ENCODE measurements at regions of chr7 and their contacts with region 1.

Region 1: GRCh38 chr7:100586266-100587025 is at the start of gene FBXO24:
- DNase-seq: peak; percentile 98
- ATAC-seq: peak; percentile 83
- H3K4me3 Mint-ChIP-seq: peak within 1 kb of the TSS; percentile 94
- H3K27ac Mint-ChIP-seq: peak within 1 kb of the TSS; percentile 96
- H3K4me1 Mint-ChIP-seq: peaks cover 27% of the 10 kb centered on the region
- H3K27me3 Mint-ChIP-seq: peaks cover 11% of the 10 kb centered on the region
- total RNA-seq, gene FBXO24: 1.1 to 1.2 TPM

Region 2: GRCh38 chr7:100509231-100509630 is 77.2 kb before region 1 on chr7:
- POLR2A ChIA-PET with region 1: no interaction called
- DNase-seq: no peak
- ATAC-seq: no peak
- H3K4me3 Mint-ChIP-seq: no peak overlapping the region
- H3K27ac Mint-ChIP-seq: no peak overlapping the region
- H3K4me1 Mint-ChIP-seq: no peaks in the 10 kb centered on the region
- H3K27me3 Mint-ChIP-seq: peaks cover 16% of the 10 kb centered on the region

Region 3: DNA sequence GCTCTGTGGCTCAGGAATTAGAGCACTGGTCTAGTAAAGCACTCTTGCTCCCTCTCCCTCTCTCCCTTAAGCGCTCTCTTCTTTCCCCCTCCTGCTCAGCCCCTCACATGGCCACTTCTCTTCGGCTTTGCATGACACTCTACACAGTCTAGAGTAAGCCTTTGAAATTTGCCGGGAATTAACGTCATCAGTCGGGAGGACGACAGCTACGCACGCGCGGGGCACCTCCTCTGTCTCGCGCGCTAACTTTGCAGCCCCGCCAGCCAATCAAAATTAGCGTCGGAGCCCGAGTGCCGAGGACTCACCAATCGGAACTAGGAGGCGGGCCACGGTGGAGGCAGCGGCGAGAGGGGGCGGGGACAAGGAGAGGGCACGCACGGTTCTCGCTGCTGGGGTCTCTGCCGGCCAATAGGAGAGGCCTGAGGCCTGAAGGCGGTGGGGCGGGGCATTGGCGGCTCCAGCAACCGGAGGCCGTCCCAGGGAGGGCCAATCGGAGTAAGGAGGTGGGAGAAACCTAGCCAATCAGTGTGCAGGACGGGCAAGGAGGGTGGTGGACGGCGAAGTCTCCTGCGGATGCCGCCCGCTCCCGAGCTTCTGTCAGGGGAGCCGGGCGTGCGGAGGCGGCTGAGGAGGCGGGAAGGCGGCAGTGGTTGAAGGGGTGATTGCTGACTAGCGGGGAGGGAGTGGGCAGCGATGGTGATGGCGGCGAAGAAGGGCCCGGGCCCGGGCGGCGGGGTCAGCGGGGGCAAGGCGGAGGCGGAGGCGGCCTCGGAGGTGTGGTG is 47.6 kb before region 1 on chr7 and contains the start of gene AGFG2:
- POLR2A ChIA-PET with region 1: interaction called, 11 read pairs
- DNase-seq: peak; percentile 99
- ATAC-seq: peak; percentile 97
- H3K4me3 Mint-ChIP-seq: peak within 1 kb of the TSS; percentile 100
- H3K27ac Mint-ChIP-seq: peak within 1 kb of the TSS; percentile 98
- H3K4me1 Mint-ChIP-seq: peaks cover 34% of the 10 kb centered on the region
- H3K27me3 Mint-ChIP-seq: no peaks in the 10 kb centered on the region
- total RNA-seq, gene AGFG2: 51.6 to 54.7 TPM

Region 4: DNA sequence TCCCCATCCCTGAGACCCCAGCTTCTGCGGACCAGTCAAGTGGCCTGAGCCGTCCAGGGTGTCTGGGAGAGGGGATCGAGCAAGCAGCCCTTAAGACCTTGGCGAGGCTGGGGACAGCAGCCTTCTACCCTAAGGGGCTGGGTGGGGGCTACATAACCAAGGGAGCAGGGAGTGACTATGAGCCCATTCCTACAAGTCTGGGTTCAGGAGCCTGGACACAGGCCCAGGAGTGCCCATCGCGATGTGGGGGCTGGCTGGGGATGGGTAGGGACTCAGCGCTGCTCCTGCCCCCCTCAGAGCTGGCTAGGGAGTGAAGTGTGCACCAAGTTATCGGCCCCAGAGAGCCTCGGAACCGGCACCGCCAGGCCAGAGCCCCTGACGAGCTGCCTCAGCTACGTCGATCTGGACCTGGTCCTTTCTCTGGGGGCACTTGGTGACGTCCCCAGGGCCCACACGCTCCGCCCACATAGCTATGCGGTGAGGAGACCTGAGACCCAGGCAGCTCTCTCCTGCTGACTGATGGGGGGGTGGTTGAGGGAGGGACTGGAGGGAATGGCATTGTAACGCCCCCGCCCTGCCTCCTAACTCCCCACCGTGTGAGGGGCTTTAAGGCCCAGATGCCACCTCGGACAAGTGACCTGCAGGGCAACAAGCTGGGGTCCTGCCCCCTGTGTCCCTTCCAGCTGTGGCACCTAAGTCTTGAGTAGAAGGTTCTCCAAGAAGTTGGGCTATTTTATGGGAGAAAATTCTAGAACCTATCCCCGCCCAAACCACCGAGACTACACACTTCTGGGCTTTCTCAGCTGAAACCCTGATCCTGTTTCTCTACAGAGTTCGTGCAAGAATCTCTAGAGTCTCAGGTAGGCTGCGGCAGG is 15.3 kb before region 1 on chr7:
- POLR2A ChIA-PET with region 1: interaction called, 89 read pairs
- DNase-seq: no peak
- ATAC-seq: no peak
- H3K4me3 Mint-ChIP-seq: peak overlapping the region; percentile 30
- H3K27ac Mint-ChIP-seq: no peak overlapping the region
- H3K4me1 Mint-ChIP-seq: peaks cover 31% of the 10 kb centered on the region
- H3K27me3 Mint-ChIP-seq: no peaks in the 10 kb centered on the region

Region 5: DNA sequence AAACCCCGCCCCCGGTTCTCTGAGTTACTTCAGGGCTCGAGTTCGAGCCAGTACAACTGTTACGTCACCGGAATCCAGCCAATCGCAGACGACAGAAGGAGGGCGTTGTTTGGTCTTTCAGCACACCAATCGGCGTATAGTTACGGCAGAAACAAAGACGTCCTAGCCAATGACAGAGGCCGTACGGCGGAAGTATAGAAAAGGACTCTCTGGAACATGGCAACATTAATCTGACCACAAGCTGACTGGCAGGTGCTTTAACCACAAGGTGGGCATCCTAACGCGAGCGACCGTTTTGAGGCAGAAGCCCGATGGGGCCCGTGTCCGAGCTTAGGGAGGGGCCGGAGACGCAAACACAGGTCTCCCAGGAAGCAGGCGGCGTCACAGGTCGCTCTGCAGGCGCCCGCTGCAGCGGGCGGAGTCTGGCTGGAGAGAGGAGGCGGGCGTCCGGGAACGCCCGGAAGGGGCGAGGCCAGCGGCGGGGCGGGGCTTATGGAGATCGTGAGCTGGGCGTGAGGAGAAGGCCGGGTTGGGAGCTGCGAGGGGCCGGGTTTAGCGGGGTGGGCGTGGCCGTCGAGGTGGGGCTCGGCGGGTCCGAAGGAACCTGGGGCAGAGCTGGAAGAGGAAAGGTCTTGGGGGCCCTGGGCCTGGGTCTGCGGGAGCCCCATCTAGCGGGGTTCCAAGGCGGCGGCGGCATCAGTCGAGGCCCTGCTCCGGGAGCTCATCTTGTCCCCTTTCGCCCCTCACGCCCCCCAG is 25.7 kb after region 1 on chr7 and contains the start of gene MOSPD3:
- POLR2A ChIA-PET with region 1: interaction called, 73 read pairs
- DNase-seq: peak; percentile 100
- ATAC-seq: peak; percentile 93
- H3K4me3 Mint-ChIP-seq: peak within 1 kb of the TSS; percentile 98
- H3K27ac Mint-ChIP-seq: peak within 1 kb of the TSS; percentile 100
- H3K4me1 Mint-ChIP-seq: peaks cover 19% of the 10 kb centered on the region
- H3K27me3 Mint-ChIP-seq: peaks cover 7% of the 10 kb centered on the region
- total RNA-seq, gene MOSPD3: 27.4 TPM

Region 6: DNA sequence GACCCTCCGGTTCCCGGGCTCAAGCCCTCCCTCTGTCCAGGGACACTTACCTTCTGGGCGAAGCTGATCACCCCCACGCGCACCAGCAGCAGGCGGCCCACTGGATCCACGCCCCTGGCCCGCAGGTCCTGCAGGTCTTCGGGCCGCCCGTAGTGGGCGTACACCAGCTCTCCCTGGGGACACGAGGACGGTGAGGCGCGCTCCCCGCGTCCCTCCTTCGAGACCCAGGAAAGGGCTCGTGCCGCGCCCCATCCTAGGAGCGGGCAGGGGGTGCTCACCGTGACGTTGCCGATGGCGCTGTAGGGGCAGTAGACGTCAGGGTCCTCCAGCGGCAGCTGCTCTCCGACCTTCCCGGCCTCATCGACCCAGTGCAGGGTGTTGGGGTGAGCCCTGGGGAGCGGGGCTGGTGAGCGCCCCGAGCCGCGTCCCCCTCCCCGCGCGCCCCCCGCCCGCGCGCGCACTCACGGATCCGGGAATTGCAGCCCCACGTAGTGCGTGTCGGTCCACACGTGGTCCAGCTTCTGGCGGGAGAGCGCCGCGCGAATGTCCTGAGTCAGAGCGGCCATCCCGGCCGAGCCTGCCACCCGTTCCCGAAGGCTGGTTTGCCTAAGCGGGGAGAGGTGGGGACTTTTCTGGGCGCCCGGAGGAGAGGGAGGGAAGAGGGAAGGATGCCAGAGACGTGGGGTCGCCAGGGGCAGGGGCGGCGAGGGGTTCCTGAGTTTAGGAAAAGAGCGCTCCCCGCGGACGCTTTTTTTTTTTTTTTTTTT is 46.7 kb after region 1 on chr7:
- POLR2A ChIA-PET with region 1: interaction called, 11 read pairs
- DNase-seq: peak; percentile 73
- ATAC-seq: peak; percentile 71
- H3K4me3 Mint-ChIP-seq: peak overlapping the region; percentile 87
- H3K27ac Mint-ChIP-seq: peak overlapping the region; percentile 87
- H3K4me1 Mint-ChIP-seq: peaks cover 31% of the 10 kb centered on the region
- H3K27me3 Mint-ChIP-seq: peaks cover 12% of the 10 kb centered on the region

Region 7: DNA sequence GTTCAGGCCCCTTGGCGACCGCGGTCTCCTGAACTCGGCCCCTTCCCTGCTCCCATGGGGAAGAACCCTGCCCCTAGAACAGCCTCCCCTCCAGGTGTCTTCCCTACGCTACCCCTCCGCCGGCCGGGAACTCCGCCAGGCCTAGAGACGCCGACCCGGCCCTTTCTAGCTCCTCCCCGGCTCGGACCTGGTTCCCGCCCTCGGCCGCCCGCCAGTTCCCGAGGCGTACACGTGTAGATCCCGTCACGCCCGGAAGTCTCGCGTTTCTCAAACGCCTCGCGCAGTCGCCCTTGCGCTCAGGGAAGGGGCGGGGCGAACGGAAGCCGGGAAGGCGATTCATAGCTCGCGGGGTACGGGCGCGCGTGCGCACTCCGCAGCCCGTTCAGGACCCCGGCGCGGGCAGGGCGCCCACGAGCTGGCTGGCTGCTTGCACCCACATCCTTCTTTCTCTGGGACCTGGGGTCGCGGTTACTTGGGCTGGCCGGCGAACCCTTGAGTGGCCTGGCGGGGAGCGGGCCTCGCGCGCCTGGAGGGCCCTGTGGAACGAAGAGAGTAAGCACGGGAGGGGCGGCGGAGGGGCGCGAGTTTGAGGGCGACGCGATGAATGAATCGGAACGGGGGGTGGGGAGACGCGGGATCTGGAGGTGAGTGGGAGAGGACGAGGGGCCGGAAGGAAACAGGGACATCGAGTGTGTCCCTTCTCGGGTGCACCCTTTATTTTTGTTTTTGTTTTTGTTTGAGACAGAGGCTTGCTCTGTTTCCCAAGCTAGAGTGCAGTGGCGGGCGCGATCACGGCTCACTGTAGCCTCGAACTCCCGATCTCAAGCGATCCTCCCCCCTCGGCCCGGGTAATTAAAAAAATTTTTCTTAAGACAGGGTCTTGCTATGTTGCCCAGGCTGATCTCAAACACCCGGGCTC is 119.6 kb after region 1 on chr7 and contains the start of gene POP7:
- POLR2A ChIA-PET with region 1: interaction called, 34 read pairs
- DNase-seq: peak; percentile 99
- ATAC-seq: peak; percentile 94
- H3K4me3 Mint-ChIP-seq: peak within 1 kb of the TSS; percentile 99
- H3K27ac Mint-ChIP-seq: peak within 1 kb of the TSS; percentile 98
- H3K4me1 Mint-ChIP-seq: peaks cover 10% of the 10 kb centered on the region
- H3K27me3 Mint-ChIP-seq: peaks cover 2% of the 10 kb centered on the region
- total RNA-seq, gene POP7: 29.6 to 32.8 TPM